A549 (cell line): ENCODE measurements at regions of chr11 and their contacts with region 1.

Region 1: DNA sequence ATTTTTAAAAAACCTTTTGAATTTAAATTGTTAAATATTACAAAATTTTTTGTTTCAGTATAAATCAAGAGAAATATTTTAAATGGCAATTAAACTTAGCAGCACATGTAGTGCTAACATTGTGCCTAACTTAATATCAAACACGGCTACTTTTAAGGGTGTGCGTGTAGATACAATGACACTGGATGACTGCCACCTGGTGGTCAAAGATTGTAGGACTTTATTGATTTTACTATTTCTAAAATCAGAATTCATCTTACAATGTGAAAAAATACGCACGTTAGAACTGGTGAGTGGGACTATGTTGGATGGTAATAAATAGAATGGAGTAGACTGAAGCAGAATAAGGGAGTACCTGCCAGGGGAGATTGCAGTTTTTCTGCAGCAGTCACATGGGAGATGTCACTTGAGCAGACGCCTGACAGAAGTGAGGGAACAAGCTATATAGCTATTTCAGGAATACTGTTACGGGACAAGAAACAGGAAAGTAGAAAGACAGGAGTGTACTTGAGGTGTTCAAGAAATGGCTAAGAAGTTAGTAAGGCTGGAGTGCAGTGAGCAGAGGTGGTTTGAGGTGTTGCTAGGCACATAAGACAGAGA is 52.9 kb downstream of the UVRAG start:
- DNase-seq: peak; percentile 43 to 52
- ATAC-seq: peak; percentile 56 to 76; a peak in 5 of 6 replicates
- H3K4me3 ChIP-seq: no peak overlapping the region
- H3K27ac ChIP-seq: no peak overlapping the region
- H3K4me1 ChIP-seq: no peaks in the 10 kb centered on the region
- CTCF ChIP-seq: peak; percentile 93
- EP300 ChIP-seq: no peak
- POLR2A ChIP-seq: no peak
- RAD21 ChIP-seq: peak; percentile 71 to 72

Region 2: GRCh38 chr11:75706260-75706729 is 161.6 kb before region 1 on chr11:
- CTCF ChIA-PET with region 1: interaction called, 20 read pairs
- POLR2A ChIA-PET with region 1: no interaction called
- DNase-seq: peak; percentile 80 to 81
- ATAC-seq: peak; percentile 95 to 100
- H3K4me3 ChIP-seq: no peak overlapping the region
- H3K27ac ChIP-seq: no peak overlapping the region
- H3K4me1 ChIP-seq: no peaks in the 10 kb centered on the region
- CTCF ChIP-seq: peak; percentile 88
- EP300 ChIP-seq: no peak
- POLR2A ChIP-seq: no peak
- RAD21 ChIP-seq: peak; percentile 55 to 60

Region 3: GRCh38 chr11:75814686-75815344 is 53.1 kb before region 1 on chr11 and contains the start of gene UVRAG:
- CTCF ChIA-PET with region 1: interaction called, 11 read pairs
- POLR2A ChIA-PET with region 1: no interaction called
- DNase-seq: peak; percentile 99
- ATAC-seq: peak; percentile 92 to 97
- H3K4me3 ChIP-seq: peak within 1 kb of the TSS; percentile 96
- H3K27ac ChIP-seq: peak within 1 kb of the TSS; percentile 89 to 92
- H3K4me1 ChIP-seq: peaks cover 18% of the 10 kb centered on the region; the same call in 2 of the 3 replicates
- CTCF ChIP-seq: no peak
- EP300 ChIP-seq: no peak
- POLR2A ChIP-seq: peak; percentile 45
- RAD21 ChIP-seq: no peak
- polyA plus RNA-seq, gene UVRAG: 12.4 and 14.1 TPM in 2 replicates

Region 4: GRCh38 chr11:75878933-75879332 is 11.1 kb after region 1 on chr11:
- CTCF ChIA-PET with region 1: interaction called, 21 read pairs
- POLR2A ChIA-PET with region 1: no interaction called
- DNase-seq: no peak
- ATAC-seq: no peak
- H3K4me3 ChIP-seq: no peak overlapping the region
- H3K27ac ChIP-seq: no peak overlapping the region
- H3K4me1 ChIP-seq: no peaks in the 10 kb centered on the region
- CTCF ChIP-seq: no peak
- EP300 ChIP-seq: no peak
- POLR2A ChIP-seq: no peak
- RAD21 ChIP-seq: no peak